Calu3 (cell line): ENCODE measurements at regions of chr11 and their contacts with region 1.

Region 1: DNA sequence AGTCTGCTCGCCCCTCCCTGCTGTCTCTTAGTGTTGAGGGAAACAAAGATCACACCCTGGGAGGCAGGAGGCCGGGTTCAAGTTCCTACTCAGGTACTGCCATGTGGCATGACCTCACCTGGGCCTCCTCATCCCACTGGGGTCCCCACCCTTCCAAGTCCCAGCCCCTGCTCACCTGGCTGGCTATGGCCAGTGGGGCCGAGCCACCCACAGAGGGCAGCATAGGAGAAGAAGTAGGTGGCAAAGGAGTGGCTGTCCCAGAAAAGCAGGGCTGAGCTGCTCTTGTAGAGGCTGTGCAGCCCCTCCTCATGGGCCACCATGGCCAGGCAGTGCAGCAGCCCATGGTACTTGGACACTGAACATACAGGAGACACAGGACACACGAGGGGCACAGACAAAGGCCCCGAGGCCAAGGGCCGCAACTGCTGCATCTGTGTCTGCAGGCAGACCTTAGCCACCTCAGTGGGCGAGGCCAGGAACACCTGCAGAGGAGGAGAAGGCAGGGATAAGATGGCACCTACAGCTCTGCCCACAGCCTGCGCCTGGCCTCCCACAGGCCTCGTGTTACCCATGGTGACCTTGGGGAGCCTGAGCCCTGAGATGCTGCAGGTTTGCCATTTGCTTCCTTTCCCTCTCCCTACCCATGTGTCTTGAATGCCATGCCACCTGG is 50.6 kb upstream of the MPEG1 start:
- DNase-seq: peak; percentile 80
- H3K4me3 Mint-ChIP-seq: no peak overlapping the region
- H3K27ac Mint-ChIP-seq: no peak overlapping the region
- H3K4me1 Mint-ChIP-seq: peaks cover 18% of the 10 kb centered on the region
- H3K27me3 Mint-ChIP-seq: no peaks in the 10 kb centered on the region
- CTCF ChIP-seq: peak; percentile 59

Region 2: DNA sequence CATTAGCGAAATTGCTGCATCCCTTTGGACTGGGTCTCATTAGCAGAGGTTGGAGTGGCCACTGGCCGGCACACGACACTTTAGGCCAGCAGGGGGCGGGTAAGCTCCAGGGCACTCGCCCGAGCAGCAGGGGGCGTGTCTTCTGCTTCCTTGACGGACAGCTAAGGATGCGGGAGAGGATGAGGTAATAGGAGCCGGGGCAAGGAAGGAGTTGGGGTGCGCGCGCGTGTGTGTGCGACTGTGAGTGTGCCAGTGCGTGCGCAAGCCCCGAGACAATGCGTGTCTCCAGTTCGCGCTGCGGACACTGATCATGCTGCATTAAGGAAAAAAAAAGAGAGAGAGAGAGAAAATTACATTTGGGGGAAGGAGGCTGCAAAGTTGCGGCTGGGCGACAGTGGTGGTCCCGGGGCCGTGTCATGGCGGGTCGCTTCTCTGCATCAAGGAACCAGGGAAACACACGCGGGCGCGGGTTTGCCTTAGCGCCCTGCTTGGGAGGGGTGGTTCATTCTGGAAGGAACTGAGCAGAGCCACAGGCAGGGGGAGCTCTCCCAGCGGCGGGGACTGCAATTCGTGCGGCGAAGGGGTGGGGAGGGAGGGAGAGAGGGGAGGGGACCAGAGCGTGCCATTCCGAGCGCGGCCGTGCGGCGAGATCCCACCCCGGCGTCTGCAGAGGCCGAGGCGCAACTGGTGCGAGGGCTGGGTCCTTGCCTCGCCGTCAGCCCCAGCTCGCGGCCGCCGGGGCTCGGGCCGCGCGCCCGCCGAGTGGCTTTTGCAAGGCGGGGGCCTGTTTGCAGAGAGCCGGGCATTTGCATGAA is 91.6 kb before region 1 on chr11 and contains the start of gene DTX4:
- CTCF ChIA-PET with region 1: interaction called, 5 read pairs
- intact Hi-C with region 1: loop called (anchors 2 kb)
- DNase-seq: peak; percentile 96
- H3K4me3 Mint-ChIP-seq: no peak within 1 kb of the TSS
- H3K27ac Mint-ChIP-seq: peak within 1 kb of the TSS; percentile 82
- H3K4me1 Mint-ChIP-seq: peaks cover 24% of the 10 kb centered on the region
- H3K27me3 Mint-ChIP-seq: no peaks in the 10 kb centered on the region
- CTCF ChIP-seq: peak; percentile 78
- total RNA-seq, gene DTX4: 56.7 and 65.8 TPM in 2 replicates

Region 3: GRCh38 chr11:59247531-59248227 is 15.7 kb before region 1 on chr11:
- CTCF ChIA-PET with region 1: no interaction called
- intact Hi-C with region 1: no loop called
- DNase-seq: peak; percentile 28
- H3K4me3 Mint-ChIP-seq: no peak overlapping the region
- H3K27ac Mint-ChIP-seq: no peak overlapping the region
- H3K4me1 Mint-ChIP-seq: no peaks in the 10 kb centered on the region
- H3K27me3 Mint-ChIP-seq: peaks cover 61% of the 10 kb centered on the region
- CTCF ChIP-seq: no peak

Region 4: DNA sequence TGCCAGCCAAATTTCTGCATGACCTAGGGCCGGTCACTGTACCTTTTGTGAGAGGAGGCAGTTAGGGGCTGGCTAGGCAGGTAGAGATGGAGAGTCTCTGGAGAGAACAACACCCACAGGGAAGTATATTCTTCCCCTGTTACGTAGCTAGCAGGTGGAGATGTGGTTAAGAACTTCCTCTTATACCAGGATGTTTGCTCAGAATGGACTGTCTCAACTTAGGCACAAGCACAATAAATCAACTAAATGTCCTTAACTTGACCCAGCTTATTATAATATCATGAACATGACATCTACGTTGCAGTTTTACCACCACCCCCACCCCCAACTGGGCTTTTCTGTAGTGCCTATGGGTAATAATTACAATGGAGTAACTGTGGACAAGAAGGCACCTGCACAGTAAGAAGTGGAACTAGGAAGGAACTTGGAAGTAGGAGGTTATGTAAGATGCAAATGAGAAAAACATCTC is 10.0 kb after region 1 on chr11:
- CTCF ChIA-PET with region 1: interaction called, 11 read pairs
- intact Hi-C with region 1: no loop called
- DNase-seq: peak; percentile 34
- H3K4me3 Mint-ChIP-seq: no peak overlapping the region
- H3K27ac Mint-ChIP-seq: peak overlapping the region; percentile 64
- H3K4me1 Mint-ChIP-seq: peaks cover 50% of the 10 kb centered on the region
- H3K27me3 Mint-ChIP-seq: no peaks in the 10 kb centered on the region
- CTCF ChIP-seq: no peak

Region 5: DNA sequence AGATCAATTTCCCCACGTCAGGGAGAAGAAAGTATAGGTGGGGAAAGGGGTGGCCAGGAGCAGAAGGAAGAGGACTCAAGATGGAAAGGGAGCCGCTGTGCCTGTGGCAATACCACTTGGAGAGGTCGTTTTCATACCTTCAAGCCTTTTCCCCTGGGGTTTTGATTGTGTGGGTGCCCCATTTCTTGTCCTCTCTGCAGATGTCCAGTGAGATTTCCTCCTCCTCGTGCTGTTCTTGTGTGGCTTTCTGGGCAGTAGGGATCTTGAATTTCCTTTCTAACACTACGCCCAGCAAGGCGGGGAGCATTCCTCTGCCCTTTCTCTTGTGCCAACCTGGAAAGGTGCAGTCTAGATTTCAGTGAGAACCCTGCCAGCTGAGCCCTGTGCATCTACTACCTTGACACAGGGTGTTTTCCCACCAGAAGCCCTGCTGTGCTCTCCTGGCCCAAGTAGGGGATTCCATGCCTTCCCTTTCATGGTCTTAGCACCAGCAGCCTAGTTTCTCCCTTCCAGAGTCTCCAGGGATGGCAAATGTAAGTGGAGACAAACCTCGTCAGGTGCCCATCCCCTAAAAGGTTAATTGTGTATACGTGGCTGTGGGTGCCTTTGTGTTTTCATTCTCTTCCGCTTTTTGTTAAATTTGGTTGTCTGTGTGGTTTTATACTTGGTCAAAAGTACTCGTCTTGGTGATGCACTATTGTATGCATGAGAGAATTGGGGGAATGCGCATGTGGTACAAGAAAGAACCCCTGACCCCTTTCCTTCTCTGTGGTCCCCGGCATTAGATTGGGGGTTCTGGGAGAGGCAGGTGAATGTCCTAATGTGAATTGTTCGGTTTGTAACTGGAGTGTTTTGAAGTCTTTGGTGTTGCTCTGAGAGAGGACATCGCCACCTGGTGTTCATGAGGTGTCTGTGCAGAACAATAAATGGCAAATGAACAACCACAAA is 20.7 kb after region 1 on chr11:
- CTCF ChIA-PET with region 1: interaction called, 7 read pairs
- intact Hi-C with region 1: loop called (anchors 1 kb)
- DNase-seq: peak; percentile 50
- H3K4me3 Mint-ChIP-seq: no peak overlapping the region
- H3K27ac Mint-ChIP-seq: no peak overlapping the region
- H3K4me1 Mint-ChIP-seq: no peaks in the 10 kb centered on the region
- H3K27me3 Mint-ChIP-seq: peaks cover 40% of the 10 kb centered on the region
- CTCF ChIP-seq: peak; percentile 58

Region 6: DNA sequence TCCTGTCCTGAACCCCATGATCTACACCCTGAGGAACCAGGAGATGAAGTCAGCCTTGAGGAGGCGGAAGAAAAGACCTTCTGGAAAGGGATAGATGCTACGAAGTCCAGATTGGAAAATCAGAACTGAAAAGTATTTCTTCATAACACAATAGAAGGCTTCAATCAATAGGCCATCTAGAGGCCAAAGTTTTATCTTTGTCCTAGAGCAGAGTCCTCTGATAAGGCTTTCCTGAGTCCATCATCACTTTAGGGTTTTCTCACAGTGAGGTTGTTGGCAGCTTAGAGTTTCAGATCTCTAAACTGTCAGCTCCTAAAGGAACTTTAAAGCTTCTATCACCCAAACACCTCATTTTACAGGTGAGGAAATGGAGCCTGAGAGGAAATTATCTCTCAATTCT is 269.3 kb after region 1 on chr11:
- CTCF ChIA-PET with region 1: interaction called, 11 read pairs
- intact Hi-C with region 1: no loop called
- DNase-seq: no peak
- H3K4me3 Mint-ChIP-seq: no peak overlapping the region
- H3K27ac Mint-ChIP-seq: no peak overlapping the region
- H3K4me1 Mint-ChIP-seq: peaks cover 16% of the 10 kb centered on the region
- H3K27me3 Mint-ChIP-seq: peaks cover 14% of the 10 kb centered on the region
- CTCF ChIP-seq: no peak

Region 7: DNA sequence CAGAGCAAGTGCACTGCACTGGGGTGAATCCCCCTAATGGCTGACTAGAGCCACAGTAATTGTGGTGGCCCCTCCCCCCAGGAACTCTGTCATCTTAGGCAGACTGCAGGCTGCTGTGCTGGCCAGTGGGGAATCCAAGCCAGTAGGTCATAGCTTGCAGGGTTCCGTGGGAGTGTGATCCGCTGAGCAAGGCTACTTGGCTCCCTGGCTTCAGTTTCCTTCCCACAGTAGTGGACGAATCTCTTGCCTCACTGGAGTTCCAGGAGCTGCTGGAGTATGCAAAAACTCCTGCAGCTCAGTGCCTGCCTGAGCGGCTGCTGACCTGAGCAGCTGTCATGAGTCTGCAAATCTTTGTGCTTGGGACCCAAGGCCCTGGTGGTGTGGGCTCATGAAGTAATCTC is 628.4 kb after region 1 on chr11:
- CTCF ChIA-PET with region 1: no interaction called
- intact Hi-C with region 1: no loop called
- DNase-seq: no peak
- H3K4me3 Mint-ChIP-seq: no peak overlapping the region
- H3K27ac Mint-ChIP-seq: no peak overlapping the region
- H3K4me1 Mint-ChIP-seq: no peaks in the 10 kb centered on the region
- H3K27me3 Mint-ChIP-seq: no peaks in the 10 kb centered on the region
- CTCF ChIP-seq: no peak